PC-3 (cell line): ENCODE measurements at regions of chr5 and their contacts with region 1.

Region 1: GRCh38 chr5:124494540-124495116 is 251.8 kb downstream of the ZNF608 start:
- DNase-seq: peak; percentile 67
- ATAC-seq: peak; percentile 80
- H3K4me3 ChIP-seq: no peak overlapping the region
- H3K27ac ChIP-seq: peak overlapping the region; percentile 47
- H3K4me1 ChIP-seq: peaks cover 18% of the 10 kb centered on the region
- H3K27me3 ChIP-seq: no peaks in the 10 kb centered on the region
- CTCF ChIP-seq: no peak

Region 2: GRCh38 chr5:124371111-124371706 is 123.4 kb before region 1 on chr5:
- CTCF ChIA-PET with region 1: no interaction called
- POLR2A ChIA-PET with region 1: no interaction called
- intact Hi-C with region 1: no loop called
- DNase-seq: no peak
- ATAC-seq: no peak
- H3K4me3 ChIP-seq: no peak overlapping the region
- H3K27ac ChIP-seq: no peak overlapping the region
- H3K4me1 ChIP-seq: no peaks in the 10 kb centered on the region
- H3K27me3 ChIP-seq: no peaks in the 10 kb centered on the region
- CTCF ChIP-seq: no peak

Region 3: DNA sequence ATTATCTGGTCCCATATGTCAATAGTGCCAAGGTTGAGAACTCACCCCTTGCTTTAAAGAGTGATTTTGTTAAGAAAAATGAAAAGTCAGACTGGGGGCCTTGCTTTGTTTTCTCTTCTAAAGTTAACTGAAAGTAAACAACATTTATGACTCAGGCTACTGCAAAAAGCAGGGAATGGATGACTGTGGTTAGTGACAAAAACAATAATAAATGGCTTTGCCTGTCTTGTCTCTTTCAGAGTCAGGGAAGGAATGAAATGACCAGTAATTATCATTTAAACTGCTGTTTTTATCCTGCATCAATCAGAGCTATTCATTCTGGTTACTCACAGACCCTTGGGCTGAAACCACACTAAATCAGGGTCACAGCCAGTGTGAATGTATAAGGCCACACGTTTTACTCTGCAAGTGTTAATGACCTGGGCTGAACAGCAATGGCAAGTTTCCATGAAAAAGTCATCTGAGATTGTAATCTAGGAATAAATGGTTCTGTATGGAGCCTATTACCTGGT is 139.7 kb after region 1 on chr5:
- CTCF ChIA-PET with region 1: no interaction called
- POLR2A ChIA-PET with region 1: no interaction called
- intact Hi-C with region 1: loop called (anchors 2 kb)
- DNase-seq: peak; percentile 71
- ATAC-seq: peak; percentile 67
- H3K4me3 ChIP-seq: 0 out of 2 replicates have a peak overlapping the region, but pooled peaks have one; percentile 11
- H3K27ac ChIP-seq: peak overlapping the region; percentile 96
- H3K4me1 ChIP-seq: peaks cover 34% of the 10 kb centered on the region
- H3K27me3 ChIP-seq: no peaks in the 10 kb centered on the region
- CTCF ChIP-seq: no peak